ENCODE measurements at regions of chr7 and their contacts with region 1.

Region 1: DNA sequence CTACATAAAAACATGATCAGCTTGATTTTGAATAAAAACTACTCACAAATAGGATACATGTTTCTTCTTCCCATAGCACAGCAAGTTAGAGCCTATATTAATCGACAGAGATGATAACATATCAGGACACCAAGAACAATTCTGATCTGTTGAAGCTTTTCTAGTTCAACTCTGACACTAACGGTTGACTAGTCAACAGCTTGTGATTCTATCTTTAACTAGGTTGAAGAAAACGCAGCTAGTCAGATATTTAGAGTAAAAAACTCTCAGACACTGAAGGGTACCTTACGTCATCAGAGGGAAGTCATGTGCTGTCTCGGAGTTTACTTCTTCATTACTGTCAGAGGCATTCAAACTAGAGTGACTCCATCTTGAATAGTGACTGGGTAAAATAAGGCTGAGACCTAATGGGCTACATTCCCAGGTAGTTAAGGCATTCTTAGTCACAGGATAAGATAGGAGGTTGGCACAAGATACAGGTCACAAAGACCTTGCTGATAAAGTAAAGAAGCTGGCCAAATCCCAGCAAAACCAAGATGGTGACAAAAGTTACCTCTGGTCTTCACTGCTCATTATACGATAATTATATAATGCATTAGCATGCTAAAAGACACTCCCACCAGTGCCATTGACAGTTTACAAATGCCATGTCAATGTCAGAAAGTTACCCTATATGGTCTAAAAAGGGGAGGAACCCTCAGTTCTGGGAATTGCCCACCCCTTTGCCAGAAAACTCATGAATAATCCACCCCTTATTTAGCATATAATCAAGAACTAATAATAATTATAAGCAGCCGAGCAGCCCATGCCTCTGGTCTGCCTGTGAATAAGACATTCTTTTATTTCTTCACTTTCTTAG is 21.3 kb downstream of the CCDC71L start:
- H3K4me3 Mint-ChIP-seq: no peak overlapping the region
- H3K27ac Mint-ChIP-seq: no peak overlapping the region
- H3K4me1 Mint-ChIP-seq: peaks cover 11% of the 10 kb centered on the region
- H3K27me3 Mint-ChIP-seq: peaks cover 1% of the 10 kb centered on the region

Region 2: GRCh38 chr7:106604303-106604923 is 35.3 kb before region 1 on chr7:
- intact Hi-C with region 1: loop called (anchors 5 kb)
- H3K4me3 Mint-ChIP-seq: no peak overlapping the region
- H3K27ac Mint-ChIP-seq: no peak overlapping the region
- H3K4me1 Mint-ChIP-seq: no peaks in the 10 kb centered on the region
- H3K27me3 Mint-ChIP-seq: no peaks in the 10 kb centered on the region

Measured in dendritic cell treated with granulocyte-macrophage colony-stimulating factor and Interleukin-4, amounts not matched to agents 40 ng/mL and 50 ng/mL, for 4 days (primary cell).